ENCODE measurements at regions of chr15 and their contacts with region 1.

Region 1: DNA sequence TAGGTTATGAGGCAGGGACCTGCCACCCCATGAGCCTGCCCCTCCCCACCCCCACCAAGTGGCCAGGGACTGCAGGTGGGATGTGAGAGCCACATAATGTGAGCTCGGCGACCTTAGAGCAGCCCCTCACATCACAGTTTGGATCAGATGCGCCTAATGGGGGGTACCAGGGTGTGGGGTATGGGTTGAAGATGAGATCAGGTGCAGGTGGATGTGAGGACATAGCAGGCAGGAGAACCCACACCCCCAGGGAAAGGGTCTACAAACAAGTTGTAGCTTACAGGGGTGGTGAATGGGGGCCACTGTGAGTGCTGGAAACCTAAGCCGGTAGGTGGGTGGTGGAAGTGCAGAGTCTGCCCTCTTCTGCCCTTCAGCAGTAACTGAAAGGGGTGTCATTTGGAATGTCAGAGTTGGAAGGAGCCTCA is 94.0 kb downstream of the CORO2B start:
- H3K4me3 ChIP-seq: no peak overlapping the region
- H3K27ac ChIP-seq: no peak overlapping the region
- H3K4me1 ChIP-seq: no peaks in the 10 kb centered on the region
- CTCF ChIP-seq: peak; percentile 67

Region 2: GRCh38 chr15:68304589-68305337 is 368.0 kb before region 1 on chr15:
- CTCF ChIA-PET with region 1: interaction called, 24 read pairs
- POLR2A ChIA-PET with region 1: no interaction called
- H3K4me3 ChIP-seq: no peak overlapping the region
- H3K27ac ChIP-seq: no peak overlapping the region
- H3K4me1 ChIP-seq: no peaks in the 10 kb centered on the region
- CTCF ChIP-seq: no peak

Region 3: DNA sequence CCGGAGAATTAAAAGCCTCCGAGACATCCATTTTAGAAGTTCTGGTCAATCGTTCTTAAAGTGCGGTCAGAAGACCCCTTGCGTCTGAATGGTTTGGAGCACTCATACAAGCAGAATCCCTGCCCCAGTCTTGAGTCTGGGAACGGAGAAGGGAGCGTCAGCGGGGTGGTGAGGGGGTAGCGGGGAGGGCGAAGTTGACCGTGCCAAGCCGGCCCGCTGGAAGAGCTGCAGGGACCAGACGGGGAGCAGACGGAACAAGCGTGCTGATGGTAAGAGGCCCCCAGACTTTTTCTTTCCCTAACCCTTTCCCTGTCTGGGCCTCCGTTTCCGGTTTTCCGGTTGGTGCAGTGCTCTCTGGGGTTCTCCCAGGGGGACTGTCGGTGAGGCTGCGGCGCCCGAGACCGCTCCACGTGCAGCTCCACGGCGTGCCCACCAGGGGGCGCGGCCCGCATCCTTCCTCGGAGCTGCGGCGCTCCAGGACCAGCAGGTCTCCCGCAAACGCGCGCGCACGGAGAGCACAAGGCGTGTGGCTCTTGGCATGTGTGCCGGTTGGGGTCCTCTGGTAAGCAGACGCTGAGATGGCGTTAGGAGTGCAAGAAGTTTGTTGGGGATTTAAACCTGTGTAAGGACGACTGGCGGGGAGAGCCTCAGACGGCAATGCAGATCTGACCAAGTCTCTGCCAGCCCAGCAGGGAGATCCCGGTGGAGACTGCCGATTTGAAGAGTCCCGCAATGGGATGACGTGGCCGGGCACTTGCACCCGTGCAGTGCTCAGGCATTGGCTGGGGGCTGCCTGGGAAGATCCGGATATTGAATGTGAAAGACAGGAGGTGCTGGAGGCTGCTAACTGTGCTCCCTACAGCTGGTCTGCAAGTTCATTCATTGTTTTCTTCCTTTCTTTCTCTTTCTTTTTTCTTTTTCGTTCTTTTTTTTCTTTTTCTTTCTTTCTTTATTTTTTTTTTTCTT is 113.2 kb before region 1 on chr15:
- CTCF ChIA-PET with region 1: interaction called, 421 read pairs
- POLR2A ChIA-PET with region 1: interaction called, 7 read pairs
- H3K4me3 ChIP-seq: peak overlapping the region; percentile 44
- H3K27ac ChIP-seq: no peak overlapping the region
- H3K4me1 ChIP-seq: no peaks in the 10 kb centered on the region
- CTCF ChIP-seq: peak; percentile 99

Region 4: DNA sequence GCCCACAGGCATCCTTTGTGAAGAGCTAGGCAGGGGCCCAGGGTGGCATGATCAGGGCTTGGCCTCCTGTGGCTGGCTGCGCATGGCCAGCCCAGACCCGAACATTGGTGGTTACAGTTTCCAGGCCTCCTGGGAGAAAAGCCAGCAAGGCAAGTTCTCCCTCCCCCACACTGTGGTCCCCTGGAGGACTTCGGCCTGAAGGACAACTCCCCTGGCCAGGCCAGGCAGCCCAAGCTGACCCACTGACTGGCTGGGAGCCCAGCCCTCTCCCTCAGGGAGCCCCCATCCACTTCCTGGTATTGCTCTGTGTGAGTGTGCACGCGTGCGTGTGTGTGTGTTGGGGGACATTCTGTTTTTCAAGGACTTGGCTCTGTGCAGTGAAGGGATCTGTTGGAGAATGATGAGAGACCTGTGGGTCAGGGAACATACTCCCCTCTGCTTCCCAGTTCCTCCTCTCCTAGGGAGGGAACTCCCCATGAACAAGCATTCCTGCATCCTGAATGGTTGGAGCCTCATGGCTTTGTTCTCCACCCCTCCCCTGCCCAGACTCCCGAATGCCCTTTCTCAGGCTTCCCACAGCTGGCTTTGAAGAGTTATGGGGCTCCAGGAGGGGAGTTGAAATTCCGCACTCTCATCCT is 64.5 kb before region 1 on chr15:
- CTCF ChIA-PET with region 1: interaction called, 11 read pairs
- POLR2A ChIA-PET with region 1: no interaction called
- H3K4me3 ChIP-seq: no peak overlapping the region
- H3K27ac ChIP-seq: no peak overlapping the region
- H3K4me1 ChIP-seq: peaks cover 21% of the 10 kb centered on the region
- CTCF ChIP-seq: no peak

Region 5: GRCh38 chr15:68658151-68658550 is 14.6 kb before region 1 on chr15:
- CTCF ChIA-PET with region 1: interaction called, 20 read pairs
- POLR2A ChIA-PET with region 1: no interaction called
- H3K4me3 ChIP-seq: no peak overlapping the region
- H3K27ac ChIP-seq: no peak overlapping the region
- H3K4me1 ChIP-seq: no peaks in the 10 kb centered on the region
- CTCF ChIP-seq: no peak

Region 6: GRCh38 chr15:68875377-68876116 is 202.8 kb after region 1 on chr15:
- CTCF ChIA-PET with region 1: interaction called, 74 read pairs
- POLR2A ChIA-PET with region 1: interaction called, 5 read pairs
- H3K4me3 ChIP-seq: peak overlapping the region; percentile 3
- H3K27ac ChIP-seq: no peak overlapping the region
- H3K4me1 ChIP-seq: no peaks in the 10 kb centered on the region
- CTCF ChIP-seq: peak; percentile 98

Measured in HEK293 (cell line).